ENCODE measurements at regions of chrX and their contacts with region 1.

Region 1: GRCh38 chrX:64975989-64976672 is at the start of gene ZC4H2:
- DNase-seq: peak; percentile 69 to 82 (median 79)
- ATAC-seq: peak; percentile 99 to 100 (median 100)
- H3K4me3 ChIP-seq: peak within 1 kb of the TSS; percentile 9 to 75 (median 60)
- H3K27ac ChIP-seq: peak within 1 kb of the TSS in 4 of 12 donors; percentile 9 to 60 (median 21)
- H3K4me1 ChIP-seq: peaks cover 0 to 6% (median 0%) of the 10 kb centered on the region in 12 donors
- H3K27me3 ChIP-seq: peaks cover 0 to 5% (median 0%) of the 10 kb centered on the region in 9 donors
- CTCF ChIP-seq: no peak
- POLR2A ChIP-seq: no peak
- total RNA-seq, gene ZC4H2: 4.1 to 11.6 (median 6.5) TPM

Region 2: DNA sequence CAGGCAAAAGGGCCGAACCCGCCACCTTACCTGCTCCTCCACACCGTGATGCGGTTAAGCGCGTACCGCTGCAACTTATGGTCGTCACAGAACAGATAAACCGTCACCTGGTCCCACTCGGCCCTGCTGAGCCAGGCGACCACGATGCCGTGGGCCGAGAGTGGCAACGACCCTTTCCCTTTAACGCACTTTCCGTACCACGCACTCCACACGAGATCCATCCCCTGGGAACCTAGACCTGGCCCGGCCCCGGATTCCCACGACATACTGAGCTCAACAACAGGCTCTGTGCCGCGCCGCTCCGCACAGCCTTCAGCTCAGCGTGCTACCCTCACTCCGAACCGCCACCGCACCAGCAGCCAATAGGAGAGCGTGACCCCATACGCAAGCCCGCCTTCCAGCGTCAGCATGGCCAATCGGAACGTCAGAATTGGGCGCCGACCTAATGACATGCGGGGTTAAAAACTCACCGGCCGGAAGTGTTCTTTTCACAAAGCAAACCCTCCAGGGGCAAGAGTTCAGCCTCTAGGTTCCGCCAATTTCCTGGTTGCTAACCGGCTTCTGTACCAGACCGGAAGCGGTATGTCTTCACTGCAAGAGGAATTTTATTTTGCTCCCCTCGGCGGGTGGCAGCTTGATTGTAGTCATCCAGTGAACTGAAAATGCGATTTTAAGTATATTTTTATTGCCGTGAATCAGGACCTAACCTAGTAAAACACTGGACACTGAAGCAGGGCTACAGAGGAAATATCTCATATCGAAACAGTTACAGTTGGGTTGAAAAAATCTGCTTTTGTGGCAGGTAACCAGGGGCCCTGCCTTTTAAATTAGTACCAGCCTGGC is 558.5 kb after region 1 on chrX and contains the start of gene LAS1L:
- intact Hi-C with region 1: loop called in 1 of 10 experiments (anchors 5 kb)
- DNase-seq: peak; percentile 90 to 93 (median 92)
- ATAC-seq: peak; percentile 99 to 100 (median 100)
- H3K4me3 ChIP-seq: peak within 1 kb of the TSS; percentile 52 to 99 (median 78)
- H3K27ac ChIP-seq: peak within 1 kb of the TSS; percentile 24 to 76 (median 58)
- H3K4me1 ChIP-seq: peaks cover 0 to 13% (median 8%) of the 10 kb centered on the region in 12 donors
- H3K27me3 ChIP-seq: peaks cover 0 to 23% (median 0%) of the 10 kb centered on the region in 9 donors
- CTCF ChIP-seq: no peak
- POLR2A ChIP-seq: peak in 1 of 2 donors; percentile 42
- total RNA-seq, gene LAS1L: 6.0 to 17.2 (median 12.8) TPM